Caco-2 (cell line): ENCODE measurements at regions of chr13 and their contacts with region 1.

Region 1: GRCh38 chr13:26707122-26708006 is 53.2 kb downstream of the GPR12 start:
- DNase-seq: peak; percentile 57 to 61
- H3K4me3 ChIP-seq: no peak overlapping the region
- H3K4me3 Mint-ChIP-seq: no peak overlapping the region
- H3K27ac Mint-ChIP-seq: no peak overlapping the region
- H3K4me1 ChIP-seq: no peaks in the 10 kb centered on the region
- H3K4me1 Mint-ChIP-seq: no peaks in the 10 kb centered on the region
- H3K27me3 ChIP-seq: no peaks in the 10 kb centered on the region
- H3K27me3 Mint-ChIP-seq: peaks cover 14% of the 10 kb centered on the region
- CTCF ChIP-seq: peak; percentile 71 to 81

Region 2: DNA sequence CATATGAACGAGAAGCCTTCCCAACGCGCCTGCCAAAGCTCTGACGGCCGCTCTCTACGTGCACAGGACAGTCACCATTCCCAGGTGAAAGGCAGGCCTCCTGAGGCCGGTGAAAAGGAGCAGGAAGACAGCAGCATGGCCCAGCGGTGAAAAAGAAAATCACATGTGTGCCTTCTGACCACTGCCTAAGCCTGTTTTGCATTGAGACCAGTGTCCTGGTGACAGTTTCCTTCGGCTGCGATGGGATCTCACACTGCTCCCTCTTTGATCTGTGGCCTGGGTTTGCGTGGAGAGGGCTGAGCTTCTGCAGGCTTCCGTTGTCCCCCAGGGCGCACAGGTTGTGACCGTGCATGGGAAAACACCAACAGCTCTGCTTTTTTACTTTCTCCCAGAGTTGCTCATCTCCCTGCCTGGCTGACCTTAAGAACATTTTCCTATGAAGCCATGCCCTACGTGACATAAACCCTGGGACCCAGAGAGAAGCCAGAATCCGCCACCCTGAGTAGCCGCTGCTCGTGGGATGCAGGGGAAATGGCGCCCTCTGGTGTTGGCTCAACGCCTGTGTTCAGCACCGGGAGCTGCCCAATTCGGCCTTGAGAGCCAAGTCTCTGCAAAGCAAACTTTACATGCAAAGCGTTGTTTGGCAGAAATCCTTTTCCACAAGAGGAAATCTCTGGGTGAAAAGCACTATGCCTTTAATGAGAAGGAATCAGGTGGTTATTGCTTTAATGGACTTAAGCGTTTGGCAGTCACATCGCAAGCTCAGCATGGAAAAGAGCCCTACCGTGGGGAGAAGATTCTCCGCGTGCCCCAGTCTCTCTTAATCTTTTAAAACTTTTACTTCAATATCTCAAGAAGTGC is 165.4 kb after region 1 on chr13:
- CTCF ChIA-PET with region 1: interaction called, 3 read pairs
- POLR2A ChIA-PET with region 1: no interaction called
- intact Hi-C with region 1: loop called (anchors 1 kb)
- DNase-seq: peak; percentile 59 to 60
- H3K4me3 ChIP-seq: no peak overlapping the region
- H3K4me3 Mint-ChIP-seq: no peak overlapping the region
- H3K27ac Mint-ChIP-seq: no peak overlapping the region
- H3K4me1 ChIP-seq: no peaks in the 10 kb centered on the region
- H3K4me1 Mint-ChIP-seq: no peaks in the 10 kb centered on the region
- H3K27me3 ChIP-seq: no peaks in the 10 kb centered on the region
- H3K27me3 Mint-ChIP-seq: no peaks in the 10 kb centered on the region
- CTCF ChIP-seq: peak; percentile 66 to 77

Region 3: GRCh38 chr13:26929971-26930730 is 222.8 kb after region 1 on chr13:
- CTCF ChIA-PET with region 1: no interaction called
- POLR2A ChIA-PET with region 1: no interaction called
- intact Hi-C with region 1: loop called (anchors 1 kb)
- DNase-seq: peak; percentile 78 to 84
- H3K4me3 ChIP-seq: no peak overlapping the region
- H3K4me3 Mint-ChIP-seq: peak overlapping the region; percentile 29
- H3K27ac Mint-ChIP-seq: no peak overlapping the region
- H3K4me1 ChIP-seq: 0 out of 2 replicates have a peak, but pooled peaks cover 4% of the 10 kb centered on the region
- H3K4me1 Mint-ChIP-seq: no peaks in the 10 kb centered on the region
- H3K27me3 ChIP-seq: peaks cover 2% of the 10 kb centered on the region; the same call in 1 of the 2 replicates
- H3K27me3 Mint-ChIP-seq: peaks cover 19% of the 10 kb centered on the region
- CTCF ChIP-seq: peak; percentile 97 to 98